ENCODE measurements at regions of chr21 and their contacts with region 1.

Region 1: GRCh38 chr21:33825915-33826314 is 89.7 kb downstream of the ATP5PO start:
- DNase-seq: no peak
- ATAC-seq: no peak
- H3K4me3 ChIP-seq: no peak overlapping the region
- H3K27ac ChIP-seq: no peak overlapping the region
- H3K4me1 ChIP-seq: peaks cover 20% of the 10 kb centered on the region
- H3K27me3 ChIP-seq: no peaks in the 10 kb centered on the region
- CTCF ChIP-seq: no peak

Region 2: DNA sequence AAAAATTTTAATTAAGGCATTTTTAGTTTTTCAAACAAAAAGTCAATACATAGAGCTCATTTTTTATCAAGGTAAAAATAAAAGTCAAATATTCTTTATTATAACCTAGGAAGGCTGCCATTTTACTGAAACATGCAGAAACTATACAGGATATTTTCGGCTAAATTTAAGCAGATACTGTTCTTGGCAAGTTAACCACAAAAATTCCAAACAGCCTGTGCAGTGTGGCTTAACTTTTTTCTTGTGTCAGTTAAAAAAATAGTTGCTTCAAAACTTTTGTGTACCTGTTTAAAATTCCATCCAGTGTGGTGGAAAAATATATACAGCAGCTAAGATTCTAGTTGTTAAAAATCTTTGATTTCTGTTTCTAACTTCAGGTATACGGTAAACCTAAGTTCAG is 45.3 kb before region 1 on chr21:
- intact Hi-C with region 1: no loop called
- DNase-seq: no peak
- ATAC-seq: no peak
- H3K4me3 ChIP-seq: no peak overlapping the region
- H3K27ac ChIP-seq: no peak overlapping the region
- H3K4me1 ChIP-seq: no peaks in the 10 kb centered on the region
- H3K27me3 ChIP-seq: no peaks in the 10 kb centered on the region
- CTCF ChIP-seq: no peak

Region 3: DNA sequence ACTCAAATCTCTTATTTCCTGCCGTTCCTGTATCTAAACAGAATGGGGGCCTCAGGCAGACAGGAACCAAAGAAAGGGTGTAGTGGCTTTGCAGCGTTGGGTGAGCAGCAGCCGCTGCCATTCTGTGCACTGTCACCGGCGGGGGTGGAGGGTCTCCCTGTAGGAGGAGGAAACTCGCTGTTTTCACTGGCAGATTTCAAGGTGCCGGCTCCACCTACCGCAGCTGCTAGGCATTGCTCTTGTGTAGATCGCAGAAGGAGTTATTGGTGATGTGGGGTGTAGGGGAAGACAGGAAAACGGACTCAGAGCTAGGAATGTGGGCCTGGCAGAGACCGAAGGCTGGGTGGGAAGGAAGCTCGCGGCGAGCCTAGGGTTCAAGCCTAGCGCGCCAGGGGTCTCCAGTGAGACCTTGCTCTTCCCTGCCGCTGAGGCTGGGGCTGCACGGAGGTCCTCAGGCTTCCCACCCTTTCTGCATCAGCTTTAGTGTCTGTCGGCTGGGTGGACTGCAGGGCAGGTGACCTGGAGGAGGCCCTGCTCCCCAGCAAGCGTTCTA is 68.9 kb after region 1 on chr21:
- intact Hi-C with region 1: loop called in 1 of 2 experiments (anchors 5 kb)
- DNase-seq: peak; percentile 78 to 79
- ATAC-seq: peak; percentile 81 to 92 (median 89)
- H3K4me3 ChIP-seq: peak overlapping the region; percentile 61
- H3K27ac ChIP-seq: no peak overlapping the region
- H3K4me1 ChIP-seq: peaks cover 11% of the 10 kb centered on the region
- H3K27me3 ChIP-seq: no peaks in the 10 kb centered on the region
- CTCF ChIP-seq: peak; percentile 67

Region 4: GRCh38 chr21:33968080-33968994 is 142.4 kb after region 1 on chr21:
- intact Hi-C with region 1: no loop called
- DNase-seq: no peak
- ATAC-seq: peak in 3 of 4 donors; percentile 68 to 78 (median 76)
- H3K4me3 ChIP-seq: no peak overlapping the region
- H3K27ac ChIP-seq: peak overlapping the region; percentile 21
- H3K4me1 ChIP-seq: peaks cover 23% of the 10 kb centered on the region
- H3K27me3 ChIP-seq: no peaks in the 10 kb centered on the region
- CTCF ChIP-seq: no peak

Measured in psoas muscle (tissue), 8 donors.